Activated CD4-positive, alpha-beta T cell treated with anti-CD3 and anti-CD28 coated beads, Interleukin-2, amount 10 ng/mL, durations not matched to agents 24 days and 14 days (primary cell): ENCODE measurements at regions of chr6 and their contacts with region 1.

Region 1: DNA sequence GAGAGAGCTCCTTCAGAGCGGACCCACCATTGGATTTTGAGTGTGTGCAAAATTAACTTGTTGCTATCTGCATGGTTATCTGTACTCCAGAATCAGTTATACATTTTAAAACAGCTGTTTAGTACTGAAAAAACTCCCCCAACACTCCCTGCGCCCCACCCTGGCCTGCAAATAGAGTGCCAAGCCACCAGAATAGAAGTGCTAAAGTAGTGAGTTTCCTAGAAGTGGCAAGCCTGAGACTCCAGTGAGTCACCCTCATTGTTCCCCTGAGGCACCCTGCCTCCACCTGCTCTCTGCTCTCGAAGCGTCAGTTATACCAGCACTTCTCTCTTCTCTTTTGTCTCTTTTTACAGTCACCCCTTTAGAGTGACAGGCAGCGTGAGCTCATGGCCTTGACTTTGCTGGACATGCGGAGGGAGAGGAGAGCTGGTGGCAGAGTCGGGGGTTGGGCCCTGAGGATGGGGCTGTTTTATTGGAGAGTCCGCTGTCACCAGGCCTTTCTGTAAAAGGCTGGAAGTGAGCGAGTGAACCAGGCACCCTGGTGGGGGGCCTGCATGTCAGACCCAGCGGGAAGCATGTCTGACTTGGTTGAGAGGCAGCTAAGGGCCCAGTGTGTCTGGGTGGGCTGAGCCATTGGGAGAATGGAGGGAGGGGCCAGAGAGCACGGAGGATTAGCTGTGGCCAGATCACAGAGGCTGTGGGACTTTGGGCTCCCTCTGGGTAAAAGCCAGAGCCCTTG is 10.4 kb downstream of the IGF2R start:
- DNase-seq: peak; percentile 86
- H3K4me3 Mint-ChIP-seq: peak overlapping the region; percentile 84
- H3K27ac Mint-ChIP-seq: peak overlapping the region; percentile 92
- H3K4me1 Mint-ChIP-seq: peaks cover 76% of the 10 kb centered on the region
- H3K27me3 Mint-ChIP-seq: no peaks in the 10 kb centered on the region

Region 2: DNA sequence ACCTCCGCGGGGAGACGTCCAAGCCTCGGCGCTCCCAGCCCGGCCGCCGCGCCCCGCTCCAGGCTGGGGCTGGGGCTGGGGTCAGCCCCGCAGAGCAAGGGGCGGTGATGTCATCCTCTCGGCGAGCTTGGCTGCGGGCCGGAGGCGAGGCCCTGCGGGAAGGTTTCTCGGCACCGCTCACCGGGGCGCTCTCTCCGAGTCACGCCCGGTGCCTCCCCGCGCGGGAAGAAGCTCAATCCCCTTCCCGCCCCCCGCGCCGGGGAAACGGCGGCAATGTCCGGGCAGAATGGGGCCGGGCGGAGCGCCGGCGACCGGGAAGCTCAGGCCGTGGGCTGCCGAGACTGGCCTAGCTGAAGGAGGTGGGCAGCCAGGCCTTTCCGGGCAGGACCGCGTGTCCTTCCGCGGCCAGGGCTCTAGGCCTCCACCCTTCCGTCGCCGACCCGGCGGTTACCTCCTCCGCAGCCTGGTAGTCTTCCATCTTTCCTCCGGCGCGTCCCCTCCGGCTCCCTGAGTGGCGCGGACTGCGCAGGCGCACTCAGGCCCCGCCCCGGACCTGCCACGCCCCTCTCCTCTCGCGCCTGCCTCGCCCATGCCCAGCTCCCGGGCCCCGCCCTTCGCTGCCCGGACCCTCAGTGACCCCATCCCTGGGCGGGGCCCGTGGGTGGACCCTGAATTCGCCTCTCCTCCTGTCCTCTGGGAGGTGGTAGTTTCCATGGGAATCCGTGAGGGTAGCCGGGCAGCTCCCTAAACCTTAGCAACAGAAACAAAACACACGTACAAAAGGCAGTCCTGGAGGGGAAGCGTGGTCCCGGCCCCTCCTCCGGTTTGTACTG is 1334.9 kb before region 1 on chr6 and contains the start of gene DYNLT1:
- intact Hi-C with region 1: loop called (anchors 5 kb)
- DNase-seq: peak; percentile 98
- H3K4me3 Mint-ChIP-seq: peak within 1 kb of the TSS; percentile 97
- H3K27ac Mint-ChIP-seq: peak within 1 kb of the TSS; percentile 97
- H3K4me1 Mint-ChIP-seq: peaks cover 72% of the 10 kb centered on the region
- H3K27me3 Mint-ChIP-seq: no peaks in the 10 kb centered on the region
- total RNA-seq, gene DYNLT1: 103 and 110 TPM in 2 replicates

Region 3: GRCh38 chr6:159094444-159095252 is 884.7 kb before region 1 on chr6:
- intact Hi-C with region 1: no loop called
- DNase-seq: peak; percentile 84
- H3K4me3 Mint-ChIP-seq: peak overlapping the region; percentile 80
- H3K27ac Mint-ChIP-seq: peak overlapping the region; percentile 98
- H3K4me1 Mint-ChIP-seq: peaks cover 74% of the 10 kb centered on the region
- H3K27me3 Mint-ChIP-seq: no peaks in the 10 kb centered on the region

Region 4: GRCh38 chr6:159726918-159727716 is 252.2 kb before region 1 on chr6 and contains the start of gene WTAP:
- intact Hi-C with region 1: loop called (anchors 2 kb)
- DNase-seq: peak; percentile 98
- H3K4me3 Mint-ChIP-seq: peak within 1 kb of the TSS; percentile 96
- H3K27ac Mint-ChIP-seq: peak within 1 kb of the TSS; percentile 98
- H3K4me1 Mint-ChIP-seq: peaks cover 34% of the 10 kb centered on the region
- H3K27me3 Mint-ChIP-seq: no peaks in the 10 kb centered on the region
- total RNA-seq, gene WTAP: 107 and 109 TPM in 2 replicates

Region 5: GRCh38 chr6:159919011-159919511 is 60.2 kb before region 1 on chr6:
- intact Hi-C with region 1: no loop called
- DNase-seq: no peak
- H3K4me3 Mint-ChIP-seq: no peak overlapping the region
- H3K27ac Mint-ChIP-seq: no peak overlapping the region
- H3K4me1 Mint-ChIP-seq: peaks cover 2% of the 10 kb centered on the region
- H3K27me3 Mint-ChIP-seq: peaks cover 6% of the 10 kb centered on the region

Region 6: DNA sequence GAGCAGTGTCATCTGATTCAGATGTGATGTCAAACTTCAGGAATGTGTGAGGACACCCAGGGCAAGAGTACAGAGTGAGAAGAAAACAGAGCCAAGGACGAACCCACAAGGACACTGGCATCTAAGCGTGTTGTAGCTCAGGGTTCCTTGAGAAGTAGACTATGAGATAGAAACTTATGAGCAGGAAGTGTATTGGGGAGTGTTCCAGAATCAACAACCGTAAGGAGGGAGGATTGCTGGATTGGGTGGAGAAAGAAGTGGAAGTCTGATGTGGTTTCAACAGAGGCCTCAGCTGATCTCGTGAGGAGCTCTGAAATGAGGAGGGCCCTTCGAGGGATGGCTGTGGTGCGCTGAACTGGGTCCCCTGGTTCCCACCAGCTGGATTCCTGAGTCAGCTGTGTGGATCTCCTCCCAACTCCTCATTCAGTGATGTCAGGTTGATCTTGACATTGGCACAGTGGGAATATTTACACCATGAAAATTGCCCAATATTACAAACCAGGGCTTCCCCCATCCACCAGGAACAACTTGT is 36.1 kb before region 1 on chr6:
- intact Hi-C with region 1: no loop called
- DNase-seq: no peak
- H3K4me3 Mint-ChIP-seq: no peak overlapping the region
- H3K27ac Mint-ChIP-seq: no peak overlapping the region
- H3K4me1 Mint-ChIP-seq: peaks cover 6% of the 10 kb centered on the region
- H3K27me3 Mint-ChIP-seq: peaks cover 15% of the 10 kb centered on the region

Region 7: DNA sequence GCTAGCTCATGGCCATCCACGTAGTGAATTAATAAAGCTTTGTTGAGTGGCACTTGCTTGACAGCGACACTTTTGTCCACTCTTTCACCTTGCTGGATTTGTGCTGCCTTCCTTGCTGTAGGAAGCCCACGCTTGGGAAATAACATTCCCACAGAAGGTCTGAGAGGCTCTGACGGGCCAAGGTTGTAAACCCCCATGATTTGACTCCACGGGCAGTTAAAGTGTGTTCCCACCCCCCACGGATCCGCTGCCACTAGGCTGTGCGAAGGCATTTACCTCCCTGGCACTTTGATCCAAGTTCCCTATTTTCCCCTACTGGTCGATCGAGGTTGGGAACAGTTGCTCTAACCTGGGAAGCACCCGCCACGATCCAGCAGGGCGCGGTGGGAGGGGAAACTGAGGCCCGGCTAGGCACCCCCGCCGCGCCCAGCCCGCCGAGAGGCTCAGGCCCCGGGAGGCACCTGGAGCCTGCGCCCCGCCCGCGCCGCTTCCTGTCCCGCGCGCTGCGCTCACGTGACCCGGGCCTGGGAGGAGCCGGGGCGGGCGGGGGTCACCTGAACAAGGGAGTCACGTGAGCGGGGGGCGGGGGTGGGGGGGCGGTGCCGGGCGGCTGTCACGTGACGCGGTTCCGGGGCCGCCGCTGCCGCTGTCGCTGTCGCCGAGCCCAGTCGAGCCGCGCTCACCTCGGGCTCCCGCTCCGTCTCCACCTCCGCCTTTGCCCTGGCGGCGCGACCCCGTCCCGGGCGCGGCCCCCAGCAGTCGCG is 10.7 kb before region 1 on chr6 and contains the start of gene IGF2R:
- intact Hi-C with region 1: loop called (anchors 1 kb)
- DNase-seq: peak; percentile 98
- H3K4me3 Mint-ChIP-seq: peak within 1 kb of the TSS; percentile 88
- H3K27ac Mint-ChIP-seq: peak within 1 kb of the TSS; percentile 91
- H3K4me1 Mint-ChIP-seq: peaks cover 37% of the 10 kb centered on the region
- H3K27me3 Mint-ChIP-seq: peaks cover 23% of the 10 kb centered on the region
- total RNA-seq, gene IGF2R: 75.1 and 77.9 TPM in 2 replicates

Region 8: DNA sequence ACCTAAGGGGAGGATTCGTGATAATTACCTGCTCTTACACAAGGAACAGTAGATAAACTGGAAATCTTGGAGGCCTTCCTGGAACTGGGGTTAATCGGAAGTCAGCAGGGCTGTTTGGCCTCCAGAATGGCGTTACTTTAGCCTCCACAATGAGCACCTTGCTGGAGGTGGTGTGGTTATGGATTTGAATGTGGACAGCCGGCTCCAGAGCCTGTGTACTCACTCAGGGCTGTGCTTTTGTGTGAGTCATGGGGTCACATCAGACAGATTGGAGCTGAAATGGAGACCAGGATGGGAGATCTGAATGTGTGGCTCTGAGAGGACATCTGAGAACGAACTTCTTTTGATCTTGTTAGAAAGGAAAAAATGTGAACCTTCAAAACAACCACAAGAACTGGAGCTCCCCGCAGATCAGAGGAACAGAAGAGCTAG is 20.0 kb after region 1 on chr6:
- intact Hi-C with region 1: loop called (anchors 1 kb)
- DNase-seq: peak; percentile 58
- H3K4me3 Mint-ChIP-seq: peak overlapping the region; percentile 21
- H3K27ac Mint-ChIP-seq: peak overlapping the region; percentile 85
- H3K4me1 Mint-ChIP-seq: peaks cover 49% of the 10 kb centered on the region
- H3K27me3 Mint-ChIP-seq: no peaks in the 10 kb centered on the region

Region 9: DNA sequence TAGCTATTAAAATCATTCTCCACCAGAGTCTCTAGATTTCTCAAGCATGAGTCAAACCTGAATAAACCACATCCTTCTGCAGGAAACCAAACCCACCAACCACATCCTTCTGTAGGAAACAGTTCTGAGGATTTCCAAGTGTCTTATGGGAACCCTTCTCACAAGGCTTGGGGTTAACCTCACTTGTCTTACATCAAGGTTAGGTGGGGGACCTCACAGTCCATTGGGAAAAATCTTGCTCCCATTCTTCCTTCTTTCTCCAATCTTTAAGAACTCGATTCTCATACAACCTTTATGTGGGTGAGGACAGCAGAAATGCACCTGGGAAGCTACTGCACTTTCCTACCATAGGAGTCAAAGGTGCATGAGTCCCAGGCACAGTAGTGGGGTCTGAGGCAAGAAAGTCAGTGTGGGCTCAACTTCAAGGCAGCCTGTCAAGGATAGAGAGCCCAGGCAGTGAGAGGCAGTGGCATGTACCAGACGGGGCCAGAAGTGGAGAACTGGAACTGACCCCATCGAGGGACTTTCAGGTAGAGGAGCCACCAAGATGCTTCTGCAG is 483.3 kb after region 1 on chr6:
- intact Hi-C with region 1: loop called (anchors 5 kb)
- DNase-seq: peak; percentile 94
- H3K4me3 Mint-ChIP-seq: peak overlapping the region; percentile 72
- H3K27ac Mint-ChIP-seq: peak overlapping the region; percentile 74
- H3K4me1 Mint-ChIP-seq: peaks cover 56% of the 10 kb centered on the region
- H3K27me3 Mint-ChIP-seq: peaks cover 27% of the 10 kb centered on the region

Region 10: GRCh38 chr6:160882706-160883359 is 903.5 kb after region 1 on chr6:
- intact Hi-C with region 1: no loop called
- DNase-seq: no peak
- H3K4me3 Mint-ChIP-seq: no peak overlapping the region
- H3K27ac Mint-ChIP-seq: no peak overlapping the region
- H3K4me1 Mint-ChIP-seq: no peaks in the 10 kb centered on the region
- H3K27me3 Mint-ChIP-seq: peaks cover 2% of the 10 kb centered on the region